Activated CD4-positive, alpha-beta T cell treated with anti-CD3 and anti-CD28 coated beads, Interleukin-2, amount 10 ng/mL, durations not matched to agents 7 days and 5 days (primary cell): ENCODE measurements at regions of chr3 and their contacts with region 1.

Region 1: GRCh38 chr3:18559331-18559842 is 134.2 kb upstream of the SATB1 start:
- DNase-seq: peak; percentile 47
- H3K4me3 Mint-ChIP-seq: no peak overlapping the region
- H3K27ac Mint-ChIP-seq: peak overlapping the region; percentile 83
- H3K4me1 Mint-ChIP-seq: peaks cover 49% of the 10 kb centered on the region
- H3K27me3 Mint-ChIP-seq: no peaks in the 10 kb centered on the region

Region 2: GRCh38 chr3:18575573-18575972 is 16.2 kb after region 1 on chr3:
- CTCF ChIA-PET with region 1: interaction called, 30 read pairs
- POLR2A ChIA-PET with region 1: no interaction called
- DNase-seq: no peak
- H3K4me3 Mint-ChIP-seq: no peak overlapping the region
- H3K27ac Mint-ChIP-seq: no peak overlapping the region
- H3K4me1 Mint-ChIP-seq: peaks cover 11% of the 10 kb centered on the region
- H3K27me3 Mint-ChIP-seq: no peaks in the 10 kb centered on the region